B cell (primary cell): ENCODE measurements at regions of chr22 and their contacts with region 1.

Region 1: GRCh38 chr22:24433813-24434470 is 6.5 kb downstream of the ADORA2A start:
- DNase-seq: peak; percentile 90
- ATAC-seq: peak; percentile 75
- H3K4me3 ChIP-seq: peak overlapping the region in 4 of 5 experiments; percentile 20 to 35 (median 25)
- H3K4me3 Mint-ChIP-seq: peak overlapping the region; percentile 80
- H3K27ac ChIP-seq: peak overlapping the region; percentile 98 to 99
- H3K27ac Mint-ChIP-seq: peak overlapping the region; percentile 97
- H3K4me1 ChIP-seq: peaks cover 98 to 100% of the 10 kb centered on the region in 2 donors
- H3K4me1 Mint-ChIP-seq: peaks cover 95% of the 10 kb centered on the region
- H3K27me3 ChIP-seq: no peaks in the 10 kb centered on the region
- H3K27me3 Mint-ChIP-seq: no peaks in the 10 kb centered on the region
- CTCF ChIP-seq: no peak

Region 2: DNA sequence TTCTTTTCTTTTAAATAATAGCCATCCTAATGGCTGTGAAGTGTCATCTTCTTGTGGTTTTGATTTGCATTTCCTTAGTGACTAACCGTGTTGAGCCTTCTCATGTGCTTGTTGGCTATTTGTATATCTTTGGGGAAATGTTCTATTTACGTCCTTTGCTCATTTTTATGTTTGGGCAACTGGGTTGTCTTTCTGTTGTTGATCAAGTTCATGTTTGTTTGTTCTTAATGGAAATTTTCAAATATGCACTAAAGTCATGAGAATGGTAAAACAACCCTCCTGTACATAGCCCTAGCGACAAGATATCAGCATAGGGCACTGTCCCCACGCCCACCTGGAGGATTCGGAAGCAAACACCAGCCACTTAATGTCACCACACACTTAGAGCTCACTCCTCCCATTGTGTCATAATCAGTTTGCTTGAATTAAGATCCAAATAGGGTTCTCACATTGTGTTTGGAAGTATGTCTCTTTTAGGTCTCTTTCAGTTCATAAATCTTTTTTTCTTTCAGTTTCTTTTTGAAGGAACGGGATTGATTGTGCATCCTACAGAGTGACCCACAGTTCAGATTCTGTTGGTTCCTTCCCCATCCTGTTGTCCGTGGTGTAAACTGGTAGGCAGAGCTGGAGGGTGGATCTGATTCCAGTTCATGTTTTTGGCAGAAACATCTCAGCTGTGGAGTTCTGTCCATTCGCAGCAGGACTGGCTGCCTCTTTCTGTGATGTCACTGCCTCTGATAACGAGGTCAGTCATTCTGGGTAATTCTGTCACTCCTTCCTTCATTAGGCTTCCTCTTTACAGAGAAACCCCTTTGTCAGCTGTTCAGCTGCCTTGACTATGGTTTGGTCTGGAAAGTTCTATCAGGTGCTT is 33.0 kb before region 1 on chr22:
- CTCF ChIA-PET with region 1: no interaction called
- POLR2A ChIA-PET with region 1: no interaction called
- intact Hi-C with region 1: loop called (anchors 2 kb)
- DNase-seq: peak; percentile 57
- ATAC-seq: peak; percentile 60
- H3K4me3 ChIP-seq: peak overlapping the region in 4 of 5 experiments; percentile 18 to 52 (median 24)
- H3K4me3 Mint-ChIP-seq: peak overlapping the region; percentile 82
- H3K27ac ChIP-seq: peak overlapping the region; percentile 75 to 81
- H3K27ac Mint-ChIP-seq: peak overlapping the region; percentile 87
- H3K4me1 ChIP-seq: peaks cover 10 to 53% of the 10 kb centered on the region in 2 donors
- H3K4me1 Mint-ChIP-seq: peaks cover 54% of the 10 kb centered on the region
- H3K27me3 ChIP-seq: no peaks in the 10 kb centered on the region
- H3K27me3 Mint-ChIP-seq: no peaks in the 10 kb centered on the region
- CTCF ChIP-seq: no peak

Region 3: DNA sequence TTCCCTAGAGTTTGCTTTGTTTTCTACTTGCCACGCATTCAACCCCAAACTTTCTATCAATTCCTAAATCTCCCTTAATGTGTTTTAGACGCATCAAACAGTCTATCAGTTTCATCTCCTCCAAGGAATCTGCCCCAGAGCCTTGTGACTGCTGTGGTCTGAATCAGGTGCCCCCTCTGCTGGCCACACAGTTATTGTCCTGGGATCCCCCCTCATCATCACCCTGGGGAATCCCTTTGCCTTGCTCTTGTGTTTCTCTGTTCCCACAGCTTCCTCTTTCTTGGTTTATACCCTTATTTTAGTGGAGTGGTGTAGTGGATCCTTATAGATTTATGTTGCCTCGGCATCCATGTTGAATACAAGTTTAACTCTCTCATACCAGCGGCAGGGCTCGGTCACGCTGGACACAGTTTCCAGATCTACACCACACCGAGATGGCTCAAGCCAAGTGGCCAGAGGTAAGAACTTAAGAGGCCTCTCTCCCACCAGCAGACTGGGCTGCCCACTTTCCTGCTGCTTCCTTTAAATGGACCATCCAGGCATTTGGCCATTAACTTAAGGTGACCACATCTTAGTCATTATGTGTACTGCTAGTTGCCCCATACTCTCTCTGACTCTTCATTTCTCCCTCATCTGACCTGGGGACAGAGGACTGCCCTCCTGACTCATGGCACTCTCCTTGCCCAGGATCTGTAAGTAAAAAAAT is 69.3 kb after region 1 on chr22:
- CTCF ChIA-PET with region 1: interaction called, 173 read pairs
- POLR2A ChIA-PET with region 1: no interaction called
- intact Hi-C with region 1: loop called (anchors 1 kb)
- DNase-seq: peak; percentile 92
- ATAC-seq: peak; percentile 90
- H3K4me3 ChIP-seq: no peak overlapping the region
- H3K4me3 Mint-ChIP-seq: no peak overlapping the region
- H3K27ac ChIP-seq: peak overlapping the region in 1 of 2 donors; percentile 55
- H3K27ac Mint-ChIP-seq: peak overlapping the region; percentile 27
- H3K4me1 ChIP-seq: peaks cover 27 to 34% of the 10 kb centered on the region in 2 donors
- H3K4me1 Mint-ChIP-seq: peaks cover 43% of the 10 kb centered on the region
- H3K27me3 ChIP-seq: peaks cover 0 to 2% (median 0%) of the 10 kb centered on the region in 4 experiments
- H3K27me3 Mint-ChIP-seq: no peaks in the 10 kb centered on the region
- CTCF ChIP-seq: peak; percentile 75

Region 4: GRCh38 chr22:24555157-24556039 is 121.5 kb after region 1 on chr22 and contains the start of gene SNRPD3:
- CTCF ChIA-PET with region 1: interaction called, 3 read pairs
- POLR2A ChIA-PET with region 1: interaction called, 6 read pairs
- intact Hi-C with region 1: loop called (anchors 1 kb)
- DNase-seq: peak; percentile 99
- ATAC-seq: peak; percentile 80
- H3K4me3 ChIP-seq: peak within 1 kb of the TSS; percentile 64 to 99 (median 94)
- H3K4me3 Mint-ChIP-seq: peak within 1 kb of the TSS; percentile 99
- H3K27ac ChIP-seq: peak within 1 kb of the TSS; percentile 87 to 96
- H3K27ac Mint-ChIP-seq: peak within 1 kb of the TSS; percentile 98
- H3K4me1 ChIP-seq: peaks cover 64 to 73% of the 10 kb centered on the region in 2 donors
- H3K4me1 Mint-ChIP-seq: peaks cover 80% of the 10 kb centered on the region
- H3K27me3 ChIP-seq: no peaks in the 10 kb centered on the region
- H3K27me3 Mint-ChIP-seq: no peaks in the 10 kb centered on the region
- CTCF ChIP-seq: no peak
- total RNA-seq, gene SNRPD3: 76.7 and 79.0 TPM in 2 replicates

Region 5: DNA sequence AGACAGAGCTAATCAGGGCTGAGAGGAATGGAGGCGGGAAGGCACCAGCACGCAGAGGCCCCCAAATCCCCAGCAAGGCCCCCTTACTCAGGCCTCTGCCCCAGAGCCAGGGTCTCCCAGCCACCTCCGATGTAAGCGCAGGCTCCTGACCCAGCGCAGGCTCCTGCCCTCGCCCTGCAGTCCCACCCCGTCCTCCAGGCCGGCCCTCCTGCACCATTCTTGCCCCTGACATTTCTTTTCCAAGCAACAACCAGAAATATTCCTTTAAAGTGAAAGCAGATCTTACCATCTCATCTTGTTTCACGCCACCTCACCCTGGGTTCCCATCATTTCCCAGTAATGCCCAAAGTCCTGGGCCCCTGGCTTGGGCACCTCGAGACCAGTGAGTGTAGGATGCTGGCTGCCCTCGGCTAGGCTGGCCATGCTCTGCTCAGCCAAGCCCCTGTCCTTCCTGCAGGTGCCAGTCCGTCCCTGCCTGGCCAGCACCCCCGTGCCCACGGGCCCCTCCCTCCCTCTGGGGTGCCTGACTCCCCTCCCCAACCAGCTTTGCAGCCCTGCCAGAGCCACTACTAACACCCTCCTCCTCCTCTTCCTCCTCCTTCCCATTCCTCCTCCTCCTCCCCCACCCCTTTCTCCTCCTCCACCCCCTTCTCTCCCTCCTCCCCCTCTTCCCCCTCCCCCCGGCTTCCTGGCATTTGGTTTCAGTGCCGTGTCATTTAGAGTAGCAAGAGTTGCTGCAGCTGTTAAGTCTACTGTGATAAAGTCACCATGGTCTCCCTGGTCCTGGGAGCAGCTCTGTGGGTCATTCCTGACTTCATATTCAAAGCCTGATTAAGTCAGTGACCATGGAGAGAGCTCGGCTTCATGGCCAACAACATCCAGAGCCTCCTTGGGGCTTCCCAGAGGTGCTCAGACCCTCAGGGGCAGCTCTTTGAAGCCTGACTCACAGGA is 261.9 kb after region 1 on chr22:
- CTCF ChIA-PET with region 1: no interaction called
- POLR2A ChIA-PET with region 1: no interaction called
- intact Hi-C with region 1: no loop called
- DNase-seq: no peak
- ATAC-seq: no peak
- H3K4me3 ChIP-seq: no peak overlapping the region
- H3K4me3 Mint-ChIP-seq: no peak overlapping the region
- H3K27ac ChIP-seq: no peak overlapping the region
- H3K27ac Mint-ChIP-seq: no peak overlapping the region
- H3K4me1 ChIP-seq: no peaks in the 10 kb centered on the region
- H3K4me1 Mint-ChIP-seq: no peaks in the 10 kb centered on the region
- H3K27me3 ChIP-seq: peaks cover 0 to 3% (median 0%) of the 10 kb centered on the region in 4 experiments
- H3K27me3 Mint-ChIP-seq: peaks cover 17% of the 10 kb centered on the region
- CTCF ChIP-seq: no peak

Region 6: DNA sequence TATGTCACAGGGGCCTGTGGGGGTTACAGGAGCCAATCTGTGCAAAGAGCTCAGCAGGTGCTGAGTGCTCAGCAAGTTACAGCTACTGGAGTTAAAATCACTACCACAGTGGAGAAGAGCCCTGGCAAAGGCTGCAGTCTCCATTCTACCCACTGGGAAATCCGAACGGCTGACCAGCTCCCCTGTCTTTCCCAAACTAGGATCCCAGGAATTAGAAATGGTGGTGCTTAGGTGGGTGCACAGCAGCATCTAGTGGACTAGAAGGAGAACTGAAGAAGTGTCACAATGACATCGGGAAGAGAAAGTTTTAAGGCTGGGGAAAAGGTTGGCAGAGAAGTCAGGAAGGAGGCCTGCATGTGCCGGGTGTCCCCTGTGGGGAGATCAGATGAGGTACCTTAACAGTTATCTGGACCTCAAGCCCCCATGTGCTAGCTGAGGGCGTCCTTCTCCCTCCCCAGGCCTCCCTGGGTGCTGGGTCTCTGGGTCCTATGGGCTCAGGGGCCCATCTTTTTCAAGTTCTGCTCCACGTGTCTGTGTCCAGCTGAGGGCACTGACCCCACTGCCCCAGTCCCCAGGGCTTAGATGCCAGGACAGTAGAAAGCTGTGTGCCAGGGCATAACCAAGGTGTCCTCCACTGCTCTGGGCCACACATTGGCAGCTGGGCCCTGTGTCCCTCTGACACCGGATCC is 338.7 kb after region 1 on chr22:
- CTCF ChIA-PET with region 1: no interaction called
- POLR2A ChIA-PET with region 1: no interaction called
- intact Hi-C with region 1: no loop called
- DNase-seq: no peak
- ATAC-seq: no peak
- H3K4me3 ChIP-seq: no peak overlapping the region
- H3K4me3 Mint-ChIP-seq: no peak overlapping the region
- H3K27ac ChIP-seq: no peak overlapping the region
- H3K27ac Mint-ChIP-seq: no peak overlapping the region
- H3K4me1 ChIP-seq: no peaks in the 10 kb centered on the region
- H3K4me1 Mint-ChIP-seq: no peaks in the 10 kb centered on the region
- H3K27me3 ChIP-seq: peaks cover 0 to 8% (median 2%) of the 10 kb centered on the region in 4 experiments
- H3K27me3 Mint-ChIP-seq: peaks cover 32% of the 10 kb centered on the region
- CTCF ChIP-seq: no peak